ENCODE measurements at regions of chr1 and their contacts with region 1.

Region 1: GRCh38 chr1:169106095-169106920 is at the start of gene ATP1B1:
- DNase-seq: no peak
- ATAC-seq: peak; percentile 94
- H3K4me3 ChIP-seq: peak within 1 kb of the TSS; percentile 86
- H3K27ac ChIP-seq: no peak within 1 kb of the TSS
- H3K4me1 ChIP-seq: peaks cover 3% of the 10 kb centered on the region; the same call in 1 of the 2 replicates
- H3K27me3 ChIP-seq: peaks cover 2 to 6% of the 10 kb centered on the region in 2 experiments; a peak in 2 of 4 replicates
- CTCF ChIP-seq: peak in 2 of 3 experiments; percentile 21 to 36; a peak in 3 of 6 replicates
- EP300 ChIP-seq: no peak
- POLR2A ChIP-seq: peak; percentile 84
- RAD21 ChIP-seq: no peak
- polyA plus RNA-seq, gene ATP1B1: 0.84 to 0.90 TPM

Region 2: GRCh38 chr1:168719306-168720111 is 386.8 kb before region 1 on chr1:
- CTCF ChIA-PET with region 1: no interaction called
- POLR2A ChIA-PET with region 1: no interaction called
- RAD21 ChIA-PET with region 1: interaction called, 4 read pairs
- SMC1A ChIA-PET with region 1: interaction called, 18 read pairs
- in situ Hi-C with region 1: no loop called
- intact Hi-C with region 1: no loop called
- DNase-seq: peak; percentile 45
- ATAC-seq: peak; percentile 62
- H3K4me3 ChIP-seq: no peak overlapping the region
- H3K27ac ChIP-seq: no peak overlapping the region
- H3K4me1 ChIP-seq: peaks cover 11% of the 10 kb centered on the region
- H3K27me3 ChIP-seq: no peaks in the 10 kb centered on the region; a peak in 1 of 4 replicates
- CTCF ChIP-seq: no peak
- EP300 ChIP-seq: no peak
- POLR2A ChIP-seq: no peak
- RAD21 ChIP-seq: no peak

Region 3: GRCh38 chr1:168920456-168921094 is 185.7 kb before region 1 on chr1:
- CTCF ChIA-PET with region 1: no interaction called
- POLR2A ChIA-PET with region 1: interaction called, 3 read pairs
- RAD21 ChIA-PET with region 1: interaction called, 7 read pairs
- SMC1A ChIA-PET with region 1: interaction called, 6 read pairs
- in situ Hi-C with region 1: no loop called
- intact Hi-C with region 1: loop called (anchors 5 kb)
- DNase-seq: no peak
- ATAC-seq: no peak
- H3K4me3 ChIP-seq: no peak overlapping the region
- H3K27ac ChIP-seq: no peak overlapping the region
- H3K4me1 ChIP-seq: peaks cover 5% of the 10 kb centered on the region
- H3K27me3 ChIP-seq: no peaks in the 10 kb centered on the region
- CTCF ChIP-seq: no peak
- EP300 ChIP-seq: no peak
- POLR2A ChIP-seq: no peak
- RAD21 ChIP-seq: no peak

Region 4: GRCh38 chr1:169024800-169025271 is 81.5 kb before region 1 on chr1:
- CTCF ChIA-PET with region 1: interaction called, 22 read pairs
- POLR2A ChIA-PET with region 1: interaction called, 18 read pairs
- RAD21 ChIA-PET with region 1: interaction called, 53 read pairs
- SMC1A ChIA-PET with region 1: interaction called, 33 read pairs
- in situ Hi-C with region 1: no loop called
- intact Hi-C with region 1: loop called (anchors 5 kb)
- DNase-seq: peak; percentile 92
- ATAC-seq: peak; percentile 94
- H3K4me3 ChIP-seq: no peak overlapping the region
- H3K27ac ChIP-seq: peak overlapping the region; percentile 35; the same call in 1 of the 2 replicates
- H3K4me1 ChIP-seq: peaks cover 15% of the 10 kb centered on the region
- H3K27me3 ChIP-seq: no peaks in the 10 kb centered on the region
- CTCF ChIP-seq: no peak
- EP300 ChIP-seq: peak; percentile 77 to 88; a peak in 3 of 4 replicates
- POLR2A ChIP-seq: no peak
- RAD21 ChIP-seq: 0 out of 2 replicates have a peak, but pooled peaks have one; percentile 14

Region 5: GRCh38 chr1:169060906-169061639 is 45.2 kb before region 1 on chr1:
- CTCF ChIA-PET with region 1: no interaction called
- POLR2A ChIA-PET with region 1: interaction called, 6 read pairs
- RAD21 ChIA-PET with region 1: interaction called, 3 read pairs
- SMC1A ChIA-PET with region 1: interaction called, 11 read pairs
- in situ Hi-C with region 1: no loop called
- intact Hi-C with region 1: no loop called
- DNase-seq: no peak
- ATAC-seq: no peak
- H3K4me3 ChIP-seq: no peak overlapping the region
- H3K27ac ChIP-seq: no peak overlapping the region
- H3K4me1 ChIP-seq: no peaks in the 10 kb centered on the region
- H3K27me3 ChIP-seq: no peaks in the 10 kb centered on the region
- CTCF ChIP-seq: no peak
- EP300 ChIP-seq: no peak
- POLR2A ChIP-seq: no peak
- RAD21 ChIP-seq: no peak

Region 6: GRCh38 chr1:169133801-169134502 is 27.6 kb after region 1 on chr1:
- CTCF ChIA-PET with region 1: interaction called, 14 read pairs
- POLR2A ChIA-PET with region 1: interaction called, 6 read pairs
- RAD21 ChIA-PET with region 1: interaction called, 15 read pairs
- SMC1A ChIA-PET with region 1: interaction called, 32 read pairs
- in situ Hi-C with region 1: no loop called
- intact Hi-C with region 1: no loop called
- DNase-seq: no peak
- ATAC-seq: peak; percentile 49; the same call in 1 of the 3 replicates
- H3K4me3 ChIP-seq: no peak overlapping the region
- H3K27ac ChIP-seq: no peak overlapping the region
- H3K4me1 ChIP-seq: no peaks in the 10 kb centered on the region
- H3K27me3 ChIP-seq: no peaks in the 10 kb centered on the region
- CTCF ChIP-seq: peak in 2 of 3 experiments; percentile 30 to 58; a peak in 3 of 6 replicates
- EP300 ChIP-seq: no peak
- POLR2A ChIP-seq: no peak
- RAD21 ChIP-seq: peak; percentile 65

Region 7: GRCh38 chr1:169260478-169261151 is 154.3 kb after region 1 on chr1:
- CTCF ChIA-PET with region 1: no interaction called
- POLR2A ChIA-PET with region 1: no interaction called
- RAD21 ChIA-PET with region 1: no interaction called
- SMC1A ChIA-PET with region 1: no interaction called
- in situ Hi-C with region 1: no loop called
- intact Hi-C with region 1: no loop called
- DNase-seq: no peak
- ATAC-seq: no peak
- H3K4me3 ChIP-seq: no peak overlapping the region
- H3K27ac ChIP-seq: no peak overlapping the region
- H3K4me1 ChIP-seq: no peaks in the 10 kb centered on the region
- H3K27me3 ChIP-seq: no peaks in the 10 kb centered on the region
- CTCF ChIP-seq: no peak
- EP300 ChIP-seq: no peak
- POLR2A ChIP-seq: no peak
- RAD21 ChIP-seq: no peak

Measured in GM12878 (cell line).